ENCODE measurements at regions of chr7 and their contacts with region 1.

Region 1: DNA sequence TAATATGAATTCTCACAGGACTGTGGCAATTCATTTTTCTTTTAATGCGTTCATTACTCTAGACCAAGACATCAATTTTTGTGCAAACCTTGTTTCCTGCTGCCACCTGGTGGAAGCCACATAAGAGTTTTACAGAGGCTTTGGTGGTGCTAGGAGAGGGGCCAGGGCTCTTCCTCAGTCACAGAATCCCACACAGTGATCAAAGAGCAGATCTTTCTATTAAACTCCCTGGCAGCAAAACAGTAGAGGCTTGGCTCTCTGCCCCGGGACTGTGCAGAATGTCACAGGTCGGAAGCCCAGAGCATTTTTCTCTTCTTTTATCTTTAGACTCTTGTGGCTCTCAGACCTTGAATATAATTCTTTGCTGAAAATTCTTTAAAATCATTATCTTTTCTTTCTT is 506.4 kb upstream of the C7orf33 start:
- DNase-seq: peak; percentile 55
- H3K4me3 Mint-ChIP-seq: no peak overlapping the region
- H3K27ac Mint-ChIP-seq: no peak overlapping the region
- H3K4me1 Mint-ChIP-seq: no peaks in the 10 kb centered on the region
- H3K27me3 Mint-ChIP-seq: peaks cover 10% of the 10 kb centered on the region

Region 2: DNA sequence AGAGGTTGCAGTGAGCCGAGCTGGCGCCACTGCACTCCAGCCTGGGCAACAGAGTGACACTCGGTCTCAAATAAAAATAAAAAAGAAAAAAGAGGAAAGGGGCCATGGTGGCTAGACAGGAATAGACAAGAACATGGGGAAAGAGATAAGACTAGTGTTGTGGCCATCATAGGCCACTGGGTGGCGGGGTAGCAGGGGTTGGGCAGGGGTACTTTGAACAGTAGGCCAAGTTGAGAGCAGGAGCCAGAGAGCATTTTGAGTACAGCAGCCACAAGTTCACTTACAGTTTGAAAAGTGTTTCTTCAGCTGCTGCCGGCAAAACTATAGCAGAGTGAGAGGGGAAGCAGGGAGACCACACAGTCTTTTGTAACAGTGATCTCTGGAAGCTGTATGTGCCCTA is 1311.5 kb before region 1 on chr7:
- CTCF ChIA-PET with region 1: no interaction called
- intact Hi-C with region 1: loop called (anchors 5 kb)
- DNase-seq: no peak
- H3K4me3 Mint-ChIP-seq: no peak overlapping the region
- H3K27ac Mint-ChIP-seq: no peak overlapping the region
- H3K4me1 Mint-ChIP-seq: no peaks in the 10 kb centered on the region
- H3K27me3 Mint-ChIP-seq: no peaks in the 10 kb centered on the region

Region 3: GRCh38 chr7:147245292-147245691 is 838.8 kb before region 1 on chr7:
- CTCF ChIA-PET with region 1: no interaction called
- intact Hi-C with region 1: loop called (anchors 2 kb)
- DNase-seq: peak; percentile 28
- H3K4me3 Mint-ChIP-seq: no peak overlapping the region
- H3K27ac Mint-ChIP-seq: no peak overlapping the region
- H3K4me1 Mint-ChIP-seq: no peaks in the 10 kb centered on the region
- H3K27me3 Mint-ChIP-seq: no peaks in the 10 kb centered on the region

Region 4: DNA sequence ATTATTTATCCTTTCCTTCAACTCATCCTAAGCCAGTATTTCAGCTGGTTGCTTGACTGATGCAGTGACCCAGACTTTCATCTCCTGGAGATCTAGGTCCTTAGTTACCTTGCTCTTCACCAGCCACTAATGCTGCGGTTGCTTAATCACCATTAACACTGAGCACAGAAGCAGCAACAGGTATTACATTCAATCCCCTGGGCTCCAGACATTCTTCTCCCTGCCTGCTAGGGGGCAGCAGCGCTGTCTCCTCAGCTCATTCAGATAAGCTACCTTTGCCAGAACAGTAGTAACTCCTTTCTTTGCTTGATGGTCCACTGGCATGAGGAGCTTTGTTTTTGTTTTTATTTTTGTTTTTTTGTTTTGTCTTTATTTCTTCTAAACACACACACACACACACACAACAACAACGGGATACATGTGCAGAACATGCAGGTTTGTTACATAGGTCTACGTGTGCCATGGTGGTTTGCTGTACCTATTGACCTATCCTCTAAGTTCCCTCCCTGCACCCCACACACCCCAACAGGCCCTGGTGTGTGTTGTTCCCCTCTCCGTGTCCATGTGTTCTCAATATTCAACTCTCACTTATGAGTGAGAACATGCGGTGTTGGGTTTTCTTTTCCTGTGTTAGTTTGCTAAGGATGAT is 536.8 kb before region 1 on chr7:
- CTCF ChIA-PET with region 1: no interaction called
- intact Hi-C with region 1: loop called (anchors 1 kb)
- DNase-seq: peak; percentile 18
- H3K4me3 Mint-ChIP-seq: no peak overlapping the region
- H3K27ac Mint-ChIP-seq: no peak overlapping the region
- H3K4me1 Mint-ChIP-seq: no peaks in the 10 kb centered on the region
- H3K27me3 Mint-ChIP-seq: no peaks in the 10 kb centered on the region

Region 5: DNA sequence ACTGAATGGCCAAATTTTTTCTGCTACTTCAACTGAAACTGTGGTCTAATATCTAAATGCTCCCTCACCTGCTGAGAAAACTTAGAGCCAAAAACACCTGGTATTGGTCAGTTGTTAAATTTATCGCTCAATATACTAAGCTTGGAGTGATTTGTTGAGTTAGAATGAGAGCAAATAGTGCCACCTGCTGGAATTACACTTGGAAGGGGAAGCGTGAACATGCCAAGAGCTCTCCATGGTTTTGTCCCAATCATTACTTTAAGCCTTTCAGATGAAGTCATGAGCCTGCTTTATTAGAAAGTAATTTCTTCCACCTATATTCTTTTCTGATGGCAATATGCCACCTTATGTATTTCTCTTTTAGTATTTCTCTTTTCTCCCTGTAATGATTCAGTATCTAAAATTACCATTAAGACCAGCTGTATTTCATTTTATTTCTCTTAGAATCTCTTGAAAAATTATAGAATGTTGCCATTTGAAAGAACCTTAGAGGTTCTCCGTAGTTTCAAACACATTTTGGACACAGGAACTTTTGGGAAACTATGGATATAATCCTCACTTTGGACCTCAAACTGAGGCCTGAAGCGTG is 58.6 kb after region 1 on chr7:
- CTCF ChIA-PET with region 1: no interaction called
- intact Hi-C with region 1: loop called (anchors 10 kb)
- DNase-seq: peak; percentile 20
- H3K4me3 Mint-ChIP-seq: no peak overlapping the region
- H3K27ac Mint-ChIP-seq: no peak overlapping the region
- H3K4me1 Mint-ChIP-seq: no peaks in the 10 kb centered on the region
- H3K27me3 Mint-ChIP-seq: no peaks in the 10 kb centered on the region

Region 6: DNA sequence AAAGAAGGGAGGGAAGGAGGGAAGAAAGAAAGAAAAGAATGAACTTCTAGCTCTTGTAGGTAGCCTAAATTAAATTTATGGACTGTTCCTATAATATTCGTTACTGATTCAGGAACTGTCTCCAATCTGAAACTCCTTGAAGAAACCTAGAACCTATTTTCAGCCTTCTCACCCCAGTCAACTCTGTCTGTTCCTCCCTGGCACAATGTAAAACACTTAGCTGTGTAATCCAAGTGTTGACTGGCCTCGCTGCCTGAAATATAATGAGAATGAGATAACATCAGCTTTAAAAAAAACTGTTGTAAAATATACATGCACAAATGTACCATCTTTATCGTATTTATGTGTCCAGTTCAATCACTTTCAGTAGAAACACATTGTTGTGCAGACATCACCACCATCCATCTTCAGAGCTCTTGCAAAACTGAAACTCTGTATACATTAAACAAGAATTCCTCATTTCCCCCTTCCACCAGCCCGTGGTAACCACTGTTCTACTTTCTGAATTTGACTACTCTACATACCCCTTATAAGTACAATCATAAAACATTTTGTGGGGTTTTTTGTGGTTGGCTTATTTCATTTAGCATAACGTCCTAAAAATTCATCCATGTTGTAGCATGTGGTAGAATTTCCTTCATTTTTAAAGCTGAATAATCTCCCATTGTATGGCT is 500.2 kb after region 1 on chr7:
- CTCF ChIA-PET with region 1: no interaction called
- intact Hi-C with region 1: no loop called
- DNase-seq: peak; percentile 42
- H3K4me3 Mint-ChIP-seq: no peak overlapping the region
- H3K27ac Mint-ChIP-seq: no peak overlapping the region
- H3K4me1 Mint-ChIP-seq: peaks cover 17% of the 10 kb centered on the region
- H3K27me3 Mint-ChIP-seq: no peaks in the 10 kb centered on the region